AG04449 (cell line): ENCODE measurements at regions of chr4 and their contacts with region 1.

Region 1: GRCh38 chr4:38319456-38320342 is 344.3 kb upstream of the KLF3 start:
- DNase-seq: peak; percentile 40
- H3K4me3 ChIP-seq: no peak overlapping the region
- CTCF ChIP-seq: peak; percentile 98

Region 2: DNA sequence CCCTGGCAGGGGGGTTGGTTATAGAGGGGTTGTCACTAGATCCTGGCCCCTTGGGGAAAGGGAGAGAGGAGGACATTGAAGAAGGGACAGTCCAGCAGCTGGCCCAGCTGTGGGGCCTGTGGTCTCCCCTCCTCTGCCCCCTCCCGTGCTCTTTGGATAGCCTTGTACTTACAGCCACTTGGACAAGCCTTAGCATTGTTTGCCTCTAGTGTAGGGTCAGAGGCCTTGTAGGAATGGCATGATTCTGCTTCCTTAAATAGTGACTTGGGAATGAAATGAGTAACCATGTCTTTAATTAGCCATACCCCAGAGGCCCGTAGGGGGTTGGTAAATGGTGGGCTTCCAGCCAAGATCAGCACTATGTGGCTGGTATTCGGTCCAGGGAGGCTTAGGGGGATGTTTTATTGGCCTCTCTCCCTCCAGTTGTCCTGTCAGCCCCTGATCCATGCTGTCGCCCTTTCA is 129.0 kb before region 1 on chr4:
- CTCF ChIA-PET with region 1: interaction called, 10 read pairs
- POLR2A ChIA-PET with region 1: no interaction called
- DNase-seq: peak; percentile 54
- H3K4me3 ChIP-seq: no peak overlapping the region
- CTCF ChIP-seq: no peak

Region 3: DNA sequence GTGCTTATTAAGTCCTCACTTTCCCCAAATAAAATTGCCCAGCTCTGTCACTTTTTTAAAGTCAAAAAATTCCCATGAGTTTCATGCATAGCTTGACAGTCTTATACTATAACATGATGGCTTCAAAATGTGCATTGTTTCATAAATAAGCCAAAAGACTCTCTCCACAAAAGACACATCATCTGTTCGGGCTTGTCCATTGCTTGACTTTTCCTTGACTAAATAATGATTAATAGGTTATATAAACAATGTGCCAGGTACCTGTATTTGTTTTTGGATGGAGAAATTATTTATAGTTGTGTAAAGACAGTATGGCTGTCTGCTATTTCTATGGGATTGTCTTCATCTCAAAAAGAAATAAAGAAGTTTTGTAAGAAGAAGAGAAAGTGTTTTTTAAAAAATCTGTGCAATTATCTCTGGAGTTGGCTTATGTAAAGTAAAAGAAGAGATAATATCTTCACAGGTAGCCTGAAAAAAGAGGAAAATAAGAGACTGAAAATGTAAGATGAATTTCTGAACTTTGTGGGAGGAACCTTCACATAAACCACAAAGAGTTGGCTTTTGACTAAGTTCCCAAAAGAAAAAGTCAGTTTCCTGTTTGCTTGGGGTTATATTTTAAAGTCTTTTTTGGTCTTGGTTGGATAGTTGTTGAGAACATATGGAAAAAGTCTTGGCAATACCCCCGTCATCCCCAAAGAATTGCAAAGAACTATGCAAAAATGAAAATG is 15.3 kb after region 1 on chr4:
- CTCF ChIA-PET with region 1: interaction called, 40 read pairs
- POLR2A ChIA-PET with region 1: no interaction called
- DNase-seq: no peak
- H3K4me3 ChIP-seq: no peak overlapping the region
- CTCF ChIP-seq: no peak

Region 4: DNA sequence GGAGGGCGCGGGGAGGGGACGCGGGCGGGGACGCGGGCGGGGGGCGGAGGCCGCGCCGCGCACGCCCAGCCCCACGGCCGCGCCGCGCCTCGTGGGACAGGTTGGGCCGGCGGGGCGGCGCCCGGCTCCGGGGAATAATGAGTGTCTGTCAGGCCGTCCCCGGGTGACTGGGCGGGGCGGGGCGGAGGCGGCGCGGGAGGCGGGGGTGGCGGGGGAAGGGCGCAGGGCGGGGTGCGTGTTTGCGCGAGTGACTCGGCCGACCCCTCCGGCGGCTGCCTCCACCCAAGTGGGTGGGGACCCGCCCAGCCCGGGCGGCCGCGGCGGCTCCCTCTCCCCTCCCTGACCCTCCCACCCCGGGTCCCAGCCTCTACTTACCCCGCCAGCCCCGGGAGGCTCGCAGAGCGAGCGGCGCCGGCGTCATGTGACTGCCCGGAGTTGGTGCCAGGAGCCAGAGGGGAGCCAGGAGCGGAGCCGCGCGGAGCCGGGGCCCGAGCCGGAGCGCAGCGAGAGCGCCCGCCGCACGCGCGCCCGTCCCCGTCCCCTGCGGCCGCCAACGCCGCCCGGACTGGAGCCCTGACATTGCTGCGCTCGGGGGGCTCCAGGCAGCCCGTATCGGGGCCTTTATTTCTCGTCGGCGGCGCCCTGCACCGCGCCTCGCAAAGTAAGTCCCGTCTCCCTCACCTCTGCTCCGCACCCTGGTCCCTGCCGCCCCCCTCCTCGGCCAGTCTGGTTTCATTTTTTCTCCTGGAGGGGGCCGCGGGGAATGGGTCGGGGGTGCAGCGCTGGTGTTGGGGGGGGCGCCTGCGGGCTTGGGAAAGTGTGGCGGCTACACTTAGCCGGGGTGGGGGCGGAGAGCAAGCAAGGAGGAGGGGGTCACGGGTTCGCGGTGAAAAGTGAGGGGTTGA is 344.4 kb after region 1 on chr4 and contains the start of gene KLF3:
- CTCF ChIA-PET with region 1: interaction called, 26 read pairs
- POLR2A ChIA-PET with region 1: interaction called, 3 read pairs
- DNase-seq: peak; percentile 24
- H3K4me3 ChIP-seq: peak within 1 kb of the TSS; percentile 72
- CTCF ChIP-seq: no peak

Region 5: DNA sequence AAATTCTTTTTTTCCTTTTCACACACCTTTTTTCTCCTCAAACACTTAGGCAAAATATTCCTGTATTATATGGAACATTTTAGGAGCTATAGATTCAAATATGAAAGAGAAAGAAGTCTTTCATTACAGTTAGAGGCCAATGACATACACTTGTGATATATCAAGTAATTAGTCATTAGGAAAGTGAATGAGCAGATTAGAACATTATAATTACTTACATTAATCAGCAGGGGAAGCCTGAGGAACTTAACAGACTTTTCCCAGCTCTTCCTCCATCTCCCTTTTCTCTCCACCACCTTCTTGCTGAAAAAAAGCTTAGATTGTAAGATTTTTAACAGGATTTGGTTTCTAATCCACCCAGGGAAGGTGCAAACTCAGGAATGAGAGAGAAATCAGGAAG is 373.9 kb after region 1 on chr4:
- CTCF ChIA-PET with region 1: interaction called, 10 read pairs
- POLR2A ChIA-PET with region 1: no interaction called
- DNase-seq: no peak
- H3K4me3 ChIP-seq: no peak overlapping the region
- CTCF ChIP-seq: no peak

Region 6: GRCh38 chr4:38730830-38731646 is 411.3 kb after region 1 on chr4:
- CTCF ChIA-PET with region 1: interaction called, 12 read pairs
- POLR2A ChIA-PET with region 1: no interaction called
- DNase-seq: peak; percentile 91
- H3K4me3 ChIP-seq: no peak overlapping the region
- CTCF ChIP-seq: peak; percentile 97